GM12878 (cell line): ENCODE measurements at regions of chrX and their contacts with region 1.

Region 1: DNA sequence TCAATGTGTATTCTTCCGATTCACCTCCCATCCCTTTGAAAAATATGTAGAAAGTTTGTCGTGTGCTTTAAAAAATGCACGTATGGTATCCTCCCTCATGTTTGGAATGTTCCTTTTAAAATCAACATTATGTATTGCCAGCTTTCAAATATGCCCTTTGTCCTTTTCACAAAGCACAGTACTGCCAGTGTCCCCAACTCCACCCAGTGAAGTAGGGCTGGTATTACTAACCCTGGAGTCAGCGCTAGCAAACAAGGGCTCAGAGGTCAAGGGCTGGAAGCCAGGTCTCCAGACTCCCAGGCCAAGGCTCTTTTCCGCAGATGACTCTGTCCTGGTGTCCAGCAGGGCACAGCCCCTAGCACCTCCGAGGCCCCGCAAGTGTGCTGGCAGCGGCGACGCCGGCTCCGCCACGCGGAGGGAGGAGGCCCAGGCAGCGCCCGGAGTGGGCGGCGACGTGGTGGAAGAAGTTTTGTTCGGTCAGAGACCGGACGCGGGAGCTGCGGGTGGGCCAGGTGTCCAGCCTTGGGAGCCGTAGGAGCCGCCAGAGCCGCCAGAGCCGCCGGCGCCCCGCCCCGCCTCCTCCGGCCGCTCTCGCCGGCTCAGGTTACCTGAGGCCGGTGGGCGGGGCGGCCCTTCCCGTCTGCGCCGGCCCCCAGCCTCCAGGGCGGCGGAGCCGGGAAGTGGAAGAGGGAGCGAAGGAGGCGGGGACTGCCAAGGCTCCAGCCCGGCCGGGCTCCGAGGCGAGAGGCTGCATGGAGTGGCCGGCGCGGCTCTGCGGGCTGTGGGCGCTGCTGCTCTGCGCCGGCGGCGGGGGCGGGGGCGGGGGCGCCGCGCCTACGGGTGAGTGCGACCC is at the start of gene IL13RA1:
- DNase-seq: no peak
- ATAC-seq: peak; percentile 73
- H3K4me3 ChIP-seq: peak within 1 kb of the TSS; percentile 41; the same call in 1 of the 2 replicates
- H3K27ac ChIP-seq: no peak within 1 kb of the TSS
- H3K4me1 ChIP-seq: peaks cover 8% of the 10 kb centered on the region
- H3K27me3 ChIP-seq: no peaks in the 10 kb centered on the region; a peak in 1 of 4 replicates
- CTCF ChIP-seq: no peak
- EP300 ChIP-seq: no peak
- POLR2A ChIP-seq: no peak
- RAD21 ChIP-seq: no peak
- polyA plus RNA-seq, gene IL13RA1: 2.3 to 4.1 TPM

Region 2: DNA sequence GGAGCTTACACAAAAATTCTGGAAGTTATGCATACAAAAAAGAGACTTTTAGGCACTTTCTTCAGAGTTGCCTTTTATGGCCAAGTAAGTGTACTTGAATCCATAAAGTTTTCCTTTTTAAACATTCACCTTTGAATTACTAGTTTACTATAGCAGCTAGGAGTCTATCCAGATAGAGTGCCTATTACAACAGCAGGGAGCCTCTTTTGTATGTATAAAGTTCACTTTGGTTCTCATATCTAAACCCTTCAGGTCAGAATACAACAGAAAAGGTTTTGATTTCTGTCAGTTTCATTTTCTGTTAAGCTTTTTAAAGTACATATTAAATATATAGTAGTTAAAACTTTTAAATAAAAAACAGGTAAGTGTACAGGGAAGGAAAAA is 51.2 kb before region 1 on chrX:
- CTCF ChIA-PET with region 1: no interaction called
- POLR2A ChIA-PET with region 1: no interaction called
- RAD21 ChIA-PET with region 1: no interaction called
- SMC1A ChIA-PET with region 1: interaction called, 11 read pairs
- in situ Hi-C with region 1: no loop called
- intact Hi-C with region 1: no loop called
- DNase-seq: no peak
- ATAC-seq: no peak
- H3K4me3 ChIP-seq: no peak overlapping the region
- H3K27ac ChIP-seq: no peak overlapping the region
- H3K4me1 ChIP-seq: no peaks in the 10 kb centered on the region
- H3K27me3 ChIP-seq: no peaks in the 10 kb centered on the region
- CTCF ChIP-seq: no peak
- EP300 ChIP-seq: no peak
- POLR2A ChIP-seq: no peak
- RAD21 ChIP-seq: no peak

Region 3: GRCh38 chrX:118745570-118745969 is 18.5 kb after region 1 on chrX:
- CTCF ChIA-PET with region 1: interaction called, 7 read pairs
- POLR2A ChIA-PET with region 1: interaction called, 6 read pairs
- RAD21 ChIA-PET with region 1: no interaction called
- SMC1A ChIA-PET with region 1: interaction called, 21 read pairs
- in situ Hi-C with region 1: no loop called
- intact Hi-C with region 1: no loop called
- DNase-seq: no peak
- ATAC-seq: no peak
- H3K4me3 ChIP-seq: no peak overlapping the region
- H3K27ac ChIP-seq: no peak overlapping the region
- H3K4me1 ChIP-seq: no peaks in the 10 kb centered on the region
- H3K27me3 ChIP-seq: 0 out of 4 replicates have a peak, but pooled peaks cover 0 to 2% of the 10 kb centered on the region in 2 experiments
- CTCF ChIP-seq: no peak
- EP300 ChIP-seq: no peak
- POLR2A ChIP-seq: no peak
- RAD21 ChIP-seq: no peak

Region 4: DNA sequence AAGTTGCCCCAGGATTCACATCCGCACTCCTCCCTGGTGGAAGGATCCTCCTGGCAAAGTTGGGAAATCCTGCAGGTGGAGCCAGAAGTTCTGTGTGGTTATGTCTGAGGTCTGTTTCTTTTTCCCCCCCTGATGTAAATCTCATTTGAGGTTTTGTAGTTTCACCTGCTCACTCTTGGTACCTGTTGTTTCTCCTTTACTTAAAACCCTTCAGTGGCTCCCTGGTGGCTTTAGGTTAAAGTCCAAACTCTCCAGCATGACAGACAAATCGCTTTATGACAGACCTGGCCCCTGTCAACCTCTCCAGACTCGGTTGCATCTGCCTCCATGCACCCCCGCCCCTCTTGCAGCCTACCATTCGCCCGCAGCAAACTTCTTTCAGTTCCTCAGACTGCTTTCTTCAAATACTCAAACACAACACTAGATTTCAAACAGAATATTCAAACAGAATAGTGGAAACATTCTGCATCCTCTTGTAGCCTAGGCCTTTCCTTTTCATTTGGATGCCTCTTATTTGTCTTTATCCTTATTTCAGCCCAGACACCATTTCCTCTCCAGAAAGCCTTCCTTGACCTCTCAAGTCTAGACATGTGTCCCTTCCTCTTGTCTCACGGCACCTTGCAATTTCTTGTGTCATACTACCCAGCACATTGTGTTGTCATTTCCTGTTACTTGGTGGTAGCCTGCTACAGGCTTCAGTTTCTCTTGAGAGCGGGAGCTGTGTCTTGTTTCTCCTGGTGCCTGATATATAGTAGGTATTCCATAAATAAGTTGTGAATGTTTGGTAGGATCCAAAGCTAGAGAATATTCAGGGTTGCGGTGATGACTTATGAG is 25.1 kb after region 1 on chrX:
- CTCF ChIA-PET with region 1: interaction called, 11 read pairs
- POLR2A ChIA-PET with region 1: interaction called, 4 read pairs
- RAD21 ChIA-PET with region 1: interaction called, 5 read pairs
- SMC1A ChIA-PET with region 1: interaction called, 26 read pairs
- in situ Hi-C with region 1: no loop called
- intact Hi-C with region 1: no loop called
- DNase-seq: peak; percentile 36
- ATAC-seq: peak; percentile 94
- H3K4me3 ChIP-seq: no peak overlapping the region; the same call in 1 of the 2 replicates
- H3K27ac ChIP-seq: no peak overlapping the region
- H3K4me1 ChIP-seq: no peaks in the 10 kb centered on the region
- H3K27me3 ChIP-seq: no peaks in the 10 kb centered on the region
- CTCF ChIP-seq: no peak
- EP300 ChIP-seq: 0 out of 4 replicates have a peak, but pooled peaks of 1 of the 2 experiments have one; percentile 15
- POLR2A ChIP-seq: no peak
- RAD21 ChIP-seq: no peak